PC-9 (cell line): ENCODE measurements at regions of chr11 and their contacts with region 1.

Region 1: GRCh38 chr11:67060111-67060522 is 3.5 kb downstream of the RHOD start:
- DNase-seq: peak; percentile 54 to 57
- H3K4me3 ChIP-seq: no peak overlapping the region
- H3K27ac ChIP-seq: peak overlapping the region; percentile 37
- H3K4me1 ChIP-seq: peaks cover 73% of the 10 kb centered on the region
- H3K27me3 ChIP-seq: no peaks in the 10 kb centered on the region
- CTCF ChIP-seq: no peak

Region 2: DNA sequence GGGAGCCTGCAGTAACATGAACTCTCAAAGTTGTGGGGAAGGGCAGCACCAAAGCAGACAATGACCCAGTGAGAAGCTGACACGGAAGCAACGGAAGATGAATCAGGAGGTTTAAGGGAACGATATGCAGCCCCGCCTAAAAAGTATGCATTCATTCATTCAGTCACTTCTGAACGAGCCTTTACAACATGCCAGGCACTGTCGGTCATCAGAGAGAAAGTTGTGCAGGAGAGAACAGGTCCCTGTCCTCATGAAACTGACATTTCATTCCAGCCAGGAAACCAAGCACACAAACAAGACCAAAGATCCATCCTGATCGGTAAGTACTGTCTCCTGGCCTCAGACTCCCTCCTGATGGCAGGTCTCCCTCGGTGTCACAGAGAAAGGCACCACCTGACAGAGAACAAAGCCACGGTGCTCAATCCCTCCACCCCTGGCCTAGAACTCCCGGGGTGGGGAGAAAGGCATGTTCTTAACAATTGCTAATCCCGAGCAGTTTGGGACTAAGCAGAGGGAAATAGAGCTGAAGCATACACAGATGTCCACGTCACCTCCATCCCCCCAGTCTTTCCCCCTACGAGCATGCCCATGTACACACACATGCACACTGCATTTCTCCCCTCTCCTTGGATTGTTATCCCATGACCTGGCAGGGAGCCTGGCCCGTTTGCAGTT is 153.9 kb before region 1 on chr11:
- CTCF ChIA-PET with region 1: no interaction called
- POLR2A ChIA-PET with region 1: no interaction called
- intact Hi-C with region 1: no loop called
- DNase-seq: peak in 1 of 2 experiments; percentile 39
- H3K4me3 ChIP-seq: no peak overlapping the region
- H3K27ac ChIP-seq: no peak overlapping the region
- H3K4me1 ChIP-seq: peaks cover 34% of the 10 kb centered on the region
- H3K27me3 ChIP-seq: no peaks in the 10 kb centered on the region
- CTCF ChIP-seq: no peak

Region 3: GRCh38 chr11:66958232-66958955 is 101.7 kb before region 1 on chr11 and contains the start of gene PC:
- CTCF ChIA-PET with region 1: no interaction called
- POLR2A ChIA-PET with region 1: interaction called, 10 read pairs
- intact Hi-C with region 1: loop called (anchors 1 kb)
- DNase-seq: peak; percentile 99 to 100
- H3K4me3 ChIP-seq: peak within 1 kb of the TSS; percentile 63
- H3K27ac ChIP-seq: no peak within 1 kb of the TSS
- H3K4me1 ChIP-seq: peaks cover 22% of the 10 kb centered on the region
- H3K27me3 ChIP-seq: no peaks in the 10 kb centered on the region
- CTCF ChIP-seq: no peak
- total RNA-seq, gene PC: 34.9 and 38.9 TPM in 2 replicates

Region 4: GRCh38 chr11:67082035-67082791 is 22.1 kb after region 1 on chr11:
- CTCF ChIA-PET with region 1: interaction called, 19 read pairs
- POLR2A ChIA-PET with region 1: interaction called, 11 read pairs
- intact Hi-C with region 1: no loop called
- DNase-seq: peak in 1 of 2 experiments; percentile 75
- H3K4me3 ChIP-seq: no peak overlapping the region
- H3K27ac ChIP-seq: no peak overlapping the region
- H3K4me1 ChIP-seq: peaks cover 44% of the 10 kb centered on the region
- H3K27me3 ChIP-seq: no peaks in the 10 kb centered on the region
- CTCF ChIP-seq: no peak

Region 5: GRCh38 chr11:67167086-67167485 is 107.0 kb after region 1 on chr11:
- CTCF ChIA-PET with region 1: interaction called, 3 read pairs
- POLR2A ChIA-PET with region 1: no interaction called
- intact Hi-C with region 1: loop called (anchors 2 kb)
- DNase-seq: no peak
- H3K4me3 ChIP-seq: no peak overlapping the region
- H3K27ac ChIP-seq: peak overlapping the region; percentile 73
- H3K4me1 ChIP-seq: peaks cover 35% of the 10 kb centered on the region
- H3K27me3 ChIP-seq: no peaks in the 10 kb centered on the region
- CTCF ChIP-seq: no peak

Region 6: GRCh38 chr11:67248653-67249052 is 188.5 kb after region 1 on chr11:
- CTCF ChIA-PET with region 1: interaction called, 3 read pairs
- POLR2A ChIA-PET with region 1: no interaction called
- intact Hi-C with region 1: loop called (anchors 1 kb)
- DNase-seq: peak; percentile 97 to 98
- H3K4me3 ChIP-seq: no peak overlapping the region; the same call in 1 of the 2 replicates
- H3K27ac ChIP-seq: peak overlapping the region; percentile 81
- H3K4me1 ChIP-seq: peaks cover 73% of the 10 kb centered on the region
- H3K27me3 ChIP-seq: no peaks in the 10 kb centered on the region
- CTCF ChIP-seq: no peak

Region 7: GRCh38 chr11:67278939-67279588 is 218.9 kb after region 1 on chr11:
- CTCF ChIA-PET with region 1: no interaction called
- POLR2A ChIA-PET with region 1: interaction called, 14 read pairs
- intact Hi-C with region 1: no loop called
- DNase-seq: no peak
- H3K4me3 ChIP-seq: no peak overlapping the region
- H3K27ac ChIP-seq: no peak overlapping the region
- H3K4me1 ChIP-seq: no peaks in the 10 kb centered on the region
- H3K27me3 ChIP-seq: no peaks in the 10 kb centered on the region
- CTCF ChIP-seq: no peak

Region 8: GRCh38 chr11:67439321-67439883 is 379.3 kb after region 1 on chr11:
- CTCF ChIA-PET with region 1: no interaction called
- POLR2A ChIA-PET with region 1: interaction called, 11 read pairs
- intact Hi-C with region 1: no loop called
- DNase-seq: peak in 1 of 2 experiments; percentile 52
- H3K4me3 ChIP-seq: no peak overlapping the region
- H3K27ac ChIP-seq: no peak overlapping the region
- H3K4me1 ChIP-seq: peaks cover 10% of the 10 kb centered on the region
- H3K27me3 ChIP-seq: no peaks in the 10 kb centered on the region
- CTCF ChIP-seq: peak; percentile 41; the same call in 1 of the 2 replicates